Mammary epithelial cell (primary cell): ENCODE measurements at regions of chr2 and their contacts with region 1.

Region 1: DNA sequence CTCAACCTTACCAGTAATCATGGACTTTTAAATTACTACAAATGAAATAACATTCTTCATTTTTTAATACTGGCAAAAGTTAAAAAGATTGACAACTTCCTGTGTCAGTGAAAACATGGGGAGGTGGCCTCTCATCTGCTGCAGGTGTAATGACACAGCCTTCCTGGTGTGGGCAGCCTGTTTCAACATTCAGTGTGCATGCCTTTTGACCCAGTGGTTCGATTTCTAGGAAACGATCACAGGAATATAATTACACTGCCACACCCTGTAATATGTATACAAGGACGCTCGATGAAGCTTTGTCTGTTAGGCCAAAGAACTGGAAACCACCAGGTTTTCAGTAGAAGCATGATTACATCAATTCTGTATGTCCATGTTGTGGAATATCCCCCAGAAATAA is 68.7 kb downstream of the MTHFD2 start:
- DNase-seq: peak; percentile 10
- H3K4me3 ChIP-seq: no peak overlapping the region
- H3K27ac ChIP-seq: no peak overlapping the region
- H3K4me1 ChIP-seq: no peaks in the 10 kb centered on the region
- H3K27me3 ChIP-seq: no peaks in the 10 kb centered on the region
- CTCF ChIP-seq: peak; percentile 32 to 47

Region 2: GRCh38 chr2:73214120-73215035 is 1052.7 kb before region 1 on chr2 and contains the start of gene SMYD5:
- CTCF ChIA-PET with region 1: no interaction called
- dilution Hi-C with region 1: no loop called
- in situ Hi-C with region 1: no loop called
- intact Hi-C with region 1: no loop called
- DNase-seq: peak; percentile 64
- H3K4me3 ChIP-seq: peak within 1 kb of the TSS; percentile 79 to 94 (median 83)
- H3K27ac ChIP-seq: peak within 1 kb of the TSS; percentile 66
- H3K4me1 ChIP-seq: peaks cover 20% of the 10 kb centered on the region
- H3K27me3 ChIP-seq: no peaks in the 10 kb centered on the region
- CTCF ChIP-seq: no peak
- total RNA-seq, gene SMYD5: 19.5 to 31.7 TPM

Region 3: GRCh38 chr2:73877071-73877802 is 389.8 kb before region 1 on chr2:
- CTCF ChIA-PET with region 1: no interaction called
- dilution Hi-C with region 1: no loop called
- in situ Hi-C with region 1: no loop called
- intact Hi-C with region 1: no loop called
- DNase-seq: no peak
- H3K4me3 ChIP-seq: no peak overlapping the region
- H3K27ac ChIP-seq: no peak overlapping the region
- H3K4me1 ChIP-seq: peaks cover 8% of the 10 kb centered on the region
- H3K27me3 ChIP-seq: no peaks in the 10 kb centered on the region
- CTCF ChIP-seq: no peak

Region 4: DNA sequence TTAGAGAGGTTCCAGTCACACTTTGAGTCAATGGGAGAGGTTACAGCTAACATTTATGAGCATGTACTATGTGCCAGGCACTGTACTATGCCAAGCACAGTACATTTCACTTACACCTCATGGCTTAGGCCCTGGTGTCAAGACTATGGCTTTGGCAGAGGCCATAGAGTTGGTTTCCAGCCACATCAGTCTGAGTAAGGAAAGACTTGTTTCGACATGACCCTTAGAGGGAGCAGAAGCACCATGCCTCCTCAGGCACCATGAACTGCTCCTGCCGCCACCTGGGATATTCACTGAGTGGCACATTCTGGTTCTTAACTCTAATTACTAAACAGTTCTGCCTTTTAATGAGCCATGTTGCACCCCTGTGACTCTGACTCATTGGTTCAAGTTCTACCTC is 327.6 kb before region 1 on chr2:
- CTCF ChIA-PET with region 1: no interaction called
- dilution Hi-C with region 1: no loop called
- in situ Hi-C with region 1: no loop called
- intact Hi-C with region 1: no loop called
- DNase-seq: peak; percentile 98
- H3K4me3 ChIP-seq: no peak overlapping the region
- H3K27ac ChIP-seq: peak overlapping the region; percentile 89
- H3K4me1 ChIP-seq: peaks cover 58% of the 10 kb centered on the region
- H3K27me3 ChIP-seq: no peaks in the 10 kb centered on the region
- CTCF ChIP-seq: peak in 1 of 2 donors; percentile 60

Region 5: DNA sequence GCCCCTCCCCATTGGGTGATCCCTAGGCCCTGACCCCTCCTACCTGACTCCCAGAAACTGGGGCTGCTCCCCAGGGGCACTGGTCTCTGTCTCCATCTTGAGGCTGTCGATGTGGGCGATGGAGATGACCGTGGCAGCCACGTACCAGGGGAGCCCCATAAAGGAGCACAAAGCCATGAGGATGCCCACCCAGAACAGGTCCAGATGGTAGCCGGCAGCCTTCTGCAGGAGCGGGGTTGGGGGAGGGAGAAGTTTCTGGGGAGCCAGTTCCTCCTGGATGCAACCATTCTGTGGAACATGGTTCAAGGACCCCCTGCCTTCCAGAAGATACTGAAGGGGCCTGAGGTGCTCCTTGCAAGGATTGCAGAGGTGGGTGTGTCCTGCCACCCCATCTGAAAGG is 34.6 kb before region 1 on chr2:
- CTCF ChIA-PET with region 1: no interaction called
- dilution Hi-C with region 1: loop called (anchors 5 kb)
- in situ Hi-C with region 1: no loop called
- intact Hi-C with region 1: no loop called
- DNase-seq: no peak
- H3K4me3 ChIP-seq: no peak overlapping the region
- H3K27ac ChIP-seq: no peak overlapping the region
- H3K4me1 ChIP-seq: no peaks in the 10 kb centered on the region
- H3K27me3 ChIP-seq: no peaks in the 10 kb centered on the region
- CTCF ChIP-seq: no peak

Region 6: DNA sequence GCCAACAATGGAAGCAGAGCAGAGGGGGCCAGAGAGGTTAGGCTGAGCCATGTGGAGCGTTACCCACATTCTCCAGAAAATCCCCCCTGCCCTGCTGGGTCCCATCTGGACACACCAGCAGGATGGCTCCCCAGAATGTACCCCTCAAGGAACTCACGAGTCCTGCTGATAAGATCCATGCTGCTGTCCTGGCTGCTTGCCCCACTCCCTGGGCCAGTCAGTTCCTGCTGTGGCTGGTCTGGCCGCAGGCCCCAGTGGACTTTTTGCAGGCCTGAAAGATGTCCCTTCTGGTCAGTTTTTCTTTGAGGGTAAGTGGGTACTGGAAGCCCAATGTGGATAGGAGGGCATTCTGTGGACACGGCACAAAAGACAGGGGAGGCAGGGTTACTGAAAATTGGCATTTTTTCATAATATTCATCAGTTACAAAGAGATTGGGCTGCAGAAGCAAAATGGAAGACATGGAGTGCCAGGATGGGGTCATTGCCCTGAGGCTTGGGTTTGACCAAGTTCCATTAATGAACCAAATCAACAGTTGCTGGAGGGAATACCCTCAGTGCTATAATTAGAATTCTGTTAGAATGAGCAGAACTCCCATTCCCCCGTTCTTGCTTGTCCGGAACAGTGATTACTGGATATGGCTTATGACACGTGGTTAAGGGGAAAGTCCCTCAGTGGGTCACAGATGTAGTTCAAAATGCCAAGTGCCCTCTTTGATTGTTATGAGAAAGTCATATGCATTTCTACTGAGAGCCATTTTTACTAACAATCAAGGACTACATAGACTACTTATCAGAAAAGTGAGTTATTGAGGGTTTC is 37.5 kb after region 1 on chr2:
- CTCF ChIA-PET with region 1: no interaction called
- dilution Hi-C with region 1: loop called (anchors 5 kb)
- in situ Hi-C with region 1: no loop called
- intact Hi-C with region 1: no loop called
- DNase-seq: no peak
- H3K4me3 ChIP-seq: no peak overlapping the region
- H3K27ac ChIP-seq: no peak overlapping the region
- H3K4me1 ChIP-seq: no peaks in the 10 kb centered on the region
- H3K27me3 ChIP-seq: no peaks in the 10 kb centered on the region
- CTCF ChIP-seq: no peak

Region 7: GRCh38 chr2:74507145-74507925 is 240.3 kb after region 1 on chr2 and contains the start of gene PCGF1:
- CTCF ChIA-PET with region 1: no interaction called
- dilution Hi-C with region 1: no loop called
- in situ Hi-C with region 1: no loop called
- intact Hi-C with region 1: no loop called
- DNase-seq: peak; percentile 95
- H3K4me3 ChIP-seq: peak within 1 kb of the TSS; percentile 81 to 100 (median 90)
- H3K27ac ChIP-seq: peak within 1 kb of the TSS; percentile 86
- H3K4me1 ChIP-seq: peaks cover 36% of the 10 kb centered on the region
- H3K27me3 ChIP-seq: no peaks in the 10 kb centered on the region
- CTCF ChIP-seq: peak; percentile 11 to 13
- total RNA-seq, gene PCGF1: 20.0 to 35.4 TPM